RWPE1 (cell line): ENCODE measurements at regions of chr5 and their contacts with region 1.

Region 1: DNA sequence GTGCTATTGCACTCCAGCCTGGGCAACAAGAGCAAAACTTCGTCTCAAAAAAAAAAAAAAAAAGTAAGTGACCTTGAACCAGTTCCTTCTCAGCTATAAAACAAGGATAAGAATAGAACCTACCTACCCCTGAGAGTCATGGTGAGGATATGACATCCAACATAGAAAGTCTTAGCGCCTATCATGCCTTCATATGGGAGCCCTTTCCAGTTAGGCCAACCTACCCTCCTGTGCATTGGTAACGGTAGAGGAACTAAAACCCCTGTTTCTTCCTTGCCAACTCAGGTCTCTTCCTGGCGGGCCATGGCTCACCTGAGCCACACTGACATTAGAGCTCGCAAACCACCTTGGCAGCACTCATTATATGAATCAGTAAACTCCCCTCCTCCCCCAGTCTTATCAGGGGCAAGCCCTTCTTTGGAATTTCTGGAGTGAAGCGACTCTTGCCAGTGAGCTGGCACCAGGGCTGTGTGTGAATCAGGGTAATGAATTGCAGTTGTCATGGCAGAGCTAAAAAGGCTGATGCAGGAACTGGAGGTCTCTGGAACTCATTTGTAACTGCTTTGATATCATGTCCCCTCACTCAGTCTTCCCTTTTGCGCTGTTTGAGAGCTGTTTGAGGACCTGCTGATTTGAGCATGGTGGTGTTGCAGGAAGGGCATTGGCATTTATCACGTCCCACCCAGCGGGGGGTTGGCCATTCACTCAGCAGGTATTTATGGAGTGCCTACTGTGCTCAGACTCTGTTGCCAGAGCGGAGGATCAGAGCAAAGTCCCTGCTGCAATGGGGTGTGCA is 10.3 kb downstream of the WWC1 start:
- DNase-seq: peak; percentile 99
- H3K27ac ChIP-seq: peak overlapping the region; percentile 62
- CTCF ChIP-seq: no peak

Region 2: DNA sequence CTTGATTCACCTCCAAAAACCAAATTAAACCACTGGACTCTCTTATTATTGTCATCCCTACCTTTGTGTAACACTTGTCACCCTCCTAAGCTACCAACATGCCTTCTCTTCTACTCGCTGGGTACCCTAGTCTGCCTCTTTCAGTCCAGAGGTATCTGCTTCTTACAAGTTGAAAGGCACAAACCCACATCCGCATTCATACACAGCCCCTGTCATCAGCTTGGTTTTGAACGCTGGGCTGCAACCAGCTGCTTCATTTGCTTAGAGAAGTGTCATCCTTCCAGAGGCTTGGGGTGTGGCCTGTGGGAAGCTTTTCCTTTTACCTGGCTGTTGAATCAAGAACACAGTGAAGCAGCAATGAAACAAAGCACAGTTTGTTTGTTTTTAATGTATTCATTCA is 149.1 kb before region 1 on chr5:
- CTCF ChIA-PET with region 1: no interaction called
- POLR2A ChIA-PET with region 1: no interaction called
- DNase-seq: no peak
- H3K27ac ChIP-seq: no peak overlapping the region
- CTCF ChIP-seq: no peak

Region 3: DNA sequence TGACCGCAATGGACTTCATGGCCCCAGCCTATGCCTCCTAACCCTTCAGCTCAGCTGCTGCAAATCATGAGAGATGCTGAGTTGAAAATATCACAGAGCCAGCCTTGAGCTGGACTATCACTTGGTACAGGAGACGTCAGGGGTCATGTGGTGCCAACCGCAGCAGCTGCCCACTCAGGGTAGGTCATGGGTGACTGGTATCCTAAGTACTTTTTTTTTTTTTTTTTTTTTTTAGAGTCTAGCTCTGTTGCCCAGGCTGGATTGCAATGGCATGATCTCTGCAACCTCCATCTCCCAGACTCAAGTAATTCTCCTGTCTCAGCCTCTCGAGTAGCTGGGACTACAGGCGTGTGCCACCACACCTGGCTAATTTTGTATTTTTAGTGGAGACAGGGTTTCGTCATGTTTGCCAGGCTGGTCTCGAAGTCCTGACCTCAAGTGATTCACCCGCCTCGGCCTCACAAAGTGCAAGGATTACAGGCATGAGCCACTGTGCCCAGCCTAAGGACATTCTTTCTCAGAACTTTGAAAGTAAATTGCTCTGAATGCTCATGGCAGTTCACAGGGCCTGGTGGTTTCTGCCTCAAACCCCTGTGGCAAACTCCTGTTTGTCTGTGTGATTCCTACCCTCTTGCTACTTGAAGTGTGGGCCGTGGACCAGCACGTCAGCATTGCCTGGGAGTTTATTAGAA is 11.0 kb after region 1 on chr5:
- CTCF ChIA-PET with region 1: interaction called, 3 read pairs
- POLR2A ChIA-PET with region 1: interaction called, 15 read pairs
- DNase-seq: no peak
- H3K27ac ChIP-seq: 0 out of 2 replicates have a peak overlapping the region, but pooled peaks have one; percentile 2
- CTCF ChIP-seq: no peak